PC-9 (cell line): ENCODE measurements at regions of chr2 and their contacts with region 1.

Region 1: DNA sequence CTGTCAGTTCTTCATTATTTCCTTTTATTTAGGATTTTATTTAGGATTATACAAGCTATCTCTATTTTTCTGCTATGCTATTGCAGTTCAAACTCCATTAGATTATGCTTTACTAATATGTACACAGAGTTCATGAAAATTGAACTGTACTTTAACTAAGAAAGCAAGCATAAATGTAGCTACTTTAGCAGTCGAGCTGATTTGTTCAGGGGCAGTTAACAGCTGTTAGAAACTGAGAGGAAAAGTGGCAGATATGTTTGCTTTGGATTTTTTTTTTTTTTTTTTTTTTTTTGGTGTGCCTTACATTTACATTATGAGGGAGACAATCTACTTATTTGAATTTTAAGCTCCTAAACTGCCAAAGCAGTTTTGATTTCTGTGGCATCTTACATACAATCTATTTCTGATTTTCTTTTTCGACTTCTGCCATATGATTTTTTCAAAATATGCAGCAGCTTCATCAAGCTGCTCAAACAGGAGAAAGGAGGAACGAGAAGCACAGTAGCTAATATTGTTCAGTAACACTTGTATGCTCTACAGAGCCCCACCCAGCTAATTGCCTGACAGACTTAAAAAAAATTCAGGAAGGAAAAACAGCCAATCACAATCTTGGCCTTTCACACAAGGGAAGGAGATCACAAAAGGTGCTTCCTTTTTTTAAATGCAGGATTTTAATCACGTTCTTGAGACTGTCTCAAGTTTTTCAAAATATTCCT is 233.4 kb upstream of the SIX3 start:
- DNase-seq: peak; percentile 38 to 66
- H3K4me3 ChIP-seq: peak overlapping the region; percentile 25; the same call in 1 of the 2 replicates
- H3K27ac ChIP-seq: peak overlapping the region; percentile 32
- H3K4me1 ChIP-seq: peaks cover 18% of the 10 kb centered on the region
- H3K27me3 ChIP-seq: no peaks in the 10 kb centered on the region
- CTCF ChIP-seq: no peak

Region 2: DNA sequence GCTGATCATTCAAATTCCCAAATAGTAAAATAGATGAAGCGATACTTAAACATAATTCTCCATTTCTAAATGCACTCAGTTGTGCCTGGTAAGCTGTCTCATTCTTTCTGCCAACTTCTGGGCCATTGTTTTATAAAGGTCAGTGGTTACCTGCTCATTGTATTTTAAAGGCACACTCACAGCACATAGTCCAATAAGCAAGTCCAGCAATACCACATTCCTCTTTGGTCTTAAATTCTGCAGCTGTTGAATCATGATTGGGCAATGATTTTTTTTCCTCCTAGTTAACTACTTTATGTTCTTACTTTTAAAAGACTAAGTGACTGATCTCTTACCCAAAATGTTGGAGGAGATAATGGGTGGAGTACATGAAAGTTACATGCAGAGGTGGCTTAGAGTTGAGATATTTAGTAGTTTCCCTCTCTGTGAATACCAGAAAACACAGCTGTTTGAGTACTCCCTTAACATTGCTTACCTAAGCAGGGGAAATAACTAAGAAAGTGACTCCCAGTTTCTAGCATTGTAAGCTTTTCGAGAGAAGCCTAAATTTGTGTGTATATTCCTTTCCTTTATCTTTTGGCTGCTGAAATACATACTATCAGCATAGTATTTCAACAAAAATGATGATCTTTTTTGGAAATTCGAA is 125.6 kb before region 1 on chr2:
- CTCF ChIA-PET with region 1: no interaction called
- POLR2A ChIA-PET with region 1: interaction called, 20 read pairs
- intact Hi-C with region 1: no loop called
- DNase-seq: peak; percentile 9 to 95
- H3K4me3 ChIP-seq: peak overlapping the region; percentile 4; the same call in 1 of the 2 replicates
- H3K27ac ChIP-seq: peak overlapping the region; percentile 52
- H3K4me1 ChIP-seq: peaks cover 61% of the 10 kb centered on the region
- H3K27me3 ChIP-seq: no peaks in the 10 kb centered on the region
- CTCF ChIP-seq: no peak

Region 3: GRCh38 chr2:44886414-44886813 is 178.3 kb after region 1 on chr2:
- CTCF ChIA-PET with region 1: no interaction called
- POLR2A ChIA-PET with region 1: no interaction called
- intact Hi-C with region 1: no loop called
- DNase-seq: no peak
- H3K4me3 ChIP-seq: no peak overlapping the region
- H3K27ac ChIP-seq: no peak overlapping the region
- H3K4me1 ChIP-seq: no peaks in the 10 kb centered on the region
- H3K27me3 ChIP-seq: no peaks in the 10 kb centered on the region
- CTCF ChIP-seq: no peak